ENCODE measurements at regions of chr3 and their contacts with region 1.

Region 1: GRCh38 chr3:53236112-53236841 is 19.5 kb downstream of the TKT start:
- DNase-seq: peak; percentile 89
- ATAC-seq: peak; percentile 84

Region 2: DNA sequence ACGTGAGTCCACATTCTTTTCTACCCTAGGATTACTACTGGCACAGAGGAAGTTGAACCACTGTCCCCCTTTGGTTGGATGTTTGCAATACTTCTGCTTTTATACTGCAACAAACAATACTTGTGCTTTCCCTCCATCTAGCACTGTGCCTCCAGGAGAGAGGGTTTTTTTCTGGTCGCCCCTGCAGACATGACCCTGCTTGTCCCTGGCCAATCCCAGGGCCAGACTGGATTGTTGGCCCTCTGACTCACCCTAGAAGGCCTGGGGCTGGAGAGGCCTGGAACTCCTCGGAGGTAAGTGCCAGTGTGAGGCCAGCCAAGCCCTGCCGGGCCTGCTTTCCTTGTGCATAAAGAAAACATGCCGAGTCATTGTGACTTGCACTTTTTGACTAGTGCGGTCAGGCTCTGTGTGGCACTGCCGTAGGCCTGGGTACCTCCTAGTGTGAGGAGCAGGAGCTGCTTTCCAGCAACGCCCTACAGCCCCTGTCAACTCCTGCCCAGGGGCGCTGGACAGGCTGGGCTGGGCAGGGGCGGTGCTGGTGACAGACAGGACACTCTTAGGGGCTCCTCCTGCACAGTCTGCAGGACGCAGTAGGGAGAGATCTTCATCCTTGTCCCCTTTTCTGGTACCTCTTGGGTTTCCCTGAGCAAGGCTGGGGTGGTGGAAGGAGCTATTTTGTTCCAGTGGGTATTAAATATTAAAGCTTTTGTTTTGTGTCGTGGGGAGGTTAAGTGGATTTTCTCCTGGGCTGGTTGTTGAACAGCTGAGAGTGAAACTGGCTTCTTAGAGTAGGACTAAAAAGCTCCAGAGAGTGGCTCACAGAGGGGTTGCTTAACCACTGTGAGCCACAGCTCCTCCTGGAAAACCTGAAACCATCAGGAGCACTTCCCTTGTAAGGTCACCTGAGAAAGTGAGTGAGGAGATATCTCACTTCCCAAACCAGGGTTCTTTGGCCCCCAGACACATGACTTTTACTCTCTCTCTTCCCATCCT is 33.9 kb after region 1 on chr3:
- intact Hi-C with region 1: loop called (anchors 5 kb)
- DNase-seq: peak; percentile 93
- ATAC-seq: peak; percentile 95

Region 3: GRCh38 chr3:53347261-53348064 is 111.2 kb after region 1 on chr3 and contains the start of gene DCP1A:
- intact Hi-C with region 1: no loop called
- DNase-seq: peak; percentile 96
- ATAC-seq: peak; percentile 99
- total RNA-seq, gene DCP1A: 17.7 TPM

Measured in Right ventricle myocardium inferior (tissue), 1 donor.